MCF 10A (cell line): ENCODE measurements at regions of chr12 and their contacts with region 1.

Region 1: DNA sequence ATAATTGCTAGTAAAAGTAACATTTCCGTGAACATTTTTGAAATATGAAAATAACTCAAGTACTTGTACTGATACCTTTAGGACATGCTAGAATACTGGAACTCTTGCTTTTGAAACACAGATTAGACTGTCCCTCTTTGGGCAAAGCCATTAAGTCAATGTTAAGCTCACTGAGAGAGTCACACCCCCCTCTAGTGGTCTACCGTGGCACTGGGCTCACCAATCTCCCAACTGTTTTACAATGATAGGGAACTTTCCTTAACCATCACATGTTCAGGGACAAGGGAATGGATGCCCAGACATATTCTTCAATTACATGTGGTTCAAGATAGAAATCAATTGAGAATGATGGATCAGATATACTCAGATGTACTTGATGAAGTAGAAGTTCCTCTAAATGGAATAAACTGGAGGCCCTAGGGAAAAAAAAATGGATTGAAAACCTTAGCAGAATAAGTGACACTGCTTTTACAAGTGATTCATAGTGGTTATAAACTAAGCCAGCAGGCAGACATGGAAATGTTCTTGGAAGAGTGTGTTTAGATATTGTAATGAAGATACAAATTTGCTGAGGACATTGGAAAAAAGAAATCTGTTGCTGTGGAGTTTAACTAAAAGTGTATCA is 17.8 kb downstream of the NANOG start:
- DNase-seq: peak; percentile 74
- H3K4me3 Mint-ChIP-seq: no peak overlapping the region
- H3K27ac Mint-ChIP-seq: no peak overlapping the region
- H3K4me1 Mint-ChIP-seq: no peaks in the 10 kb centered on the region
- H3K27me3 Mint-ChIP-seq: no peaks in the 10 kb centered on the region
- CTCF ChIP-seq: peak; percentile 92

Region 2: GRCh38 chr12:7219599-7220243 is 587.3 kb before region 1 on chr12:
- CTCF ChIA-PET with region 1: interaction called, 4 read pairs
- POLR2A ChIA-PET with region 1: no interaction called
- intact Hi-C with region 1: loop called (anchors 5 kb)
- DNase-seq: peak; percentile 80
- H3K4me3 Mint-ChIP-seq: no peak overlapping the region
- H3K27ac Mint-ChIP-seq: no peak overlapping the region
- H3K4me1 Mint-ChIP-seq: no peaks in the 10 kb centered on the region
- H3K27me3 Mint-ChIP-seq: peaks cover 23% of the 10 kb centered on the region
- CTCF ChIP-seq: peak; percentile 84

Region 3: GRCh38 chr12:7555752-7556151 is 251.2 kb before region 1 on chr12:
- CTCF ChIA-PET with region 1: no interaction called
- POLR2A ChIA-PET with region 1: no interaction called
- intact Hi-C with region 1: no loop called
- DNase-seq: peak; percentile 67
- H3K4me3 Mint-ChIP-seq: no peak overlapping the region
- H3K27ac Mint-ChIP-seq: peak overlapping the region; percentile 33
- H3K4me1 Mint-ChIP-seq: peaks cover 7% of the 10 kb centered on the region
- H3K27me3 Mint-ChIP-seq: peaks cover 11% of the 10 kb centered on the region
- CTCF ChIP-seq: no peak

Region 4: GRCh38 chr12:7583571-7583970 is 223.4 kb before region 1 on chr12:
- CTCF ChIA-PET with region 1: interaction called, 3 read pairs
- POLR2A ChIA-PET with region 1: no interaction called
- intact Hi-C with region 1: loop called (anchors 5 kb)
- DNase-seq: no peak
- H3K4me3 Mint-ChIP-seq: no peak overlapping the region
- H3K27ac Mint-ChIP-seq: peak overlapping the region; percentile 57
- H3K4me1 Mint-ChIP-seq: peaks cover 11% of the 10 kb centered on the region
- H3K27me3 Mint-ChIP-seq: no peaks in the 10 kb centered on the region
- CTCF ChIP-seq: no peak

Region 5: GRCh38 chr12:7678738-7679137 is 128.2 kb before region 1 on chr12:
- CTCF ChIA-PET with region 1: interaction called, 86 read pairs
- POLR2A ChIA-PET with region 1: interaction called, 3 read pairs
- intact Hi-C with region 1: loop called (anchors 1 kb)
- DNase-seq: peak; percentile 33
- H3K4me3 Mint-ChIP-seq: no peak overlapping the region
- H3K27ac Mint-ChIP-seq: no peak overlapping the region
- H3K4me1 Mint-ChIP-seq: no peaks in the 10 kb centered on the region
- H3K27me3 Mint-ChIP-seq: no peaks in the 10 kb centered on the region
- CTCF ChIP-seq: no peak

Region 6: DNA sequence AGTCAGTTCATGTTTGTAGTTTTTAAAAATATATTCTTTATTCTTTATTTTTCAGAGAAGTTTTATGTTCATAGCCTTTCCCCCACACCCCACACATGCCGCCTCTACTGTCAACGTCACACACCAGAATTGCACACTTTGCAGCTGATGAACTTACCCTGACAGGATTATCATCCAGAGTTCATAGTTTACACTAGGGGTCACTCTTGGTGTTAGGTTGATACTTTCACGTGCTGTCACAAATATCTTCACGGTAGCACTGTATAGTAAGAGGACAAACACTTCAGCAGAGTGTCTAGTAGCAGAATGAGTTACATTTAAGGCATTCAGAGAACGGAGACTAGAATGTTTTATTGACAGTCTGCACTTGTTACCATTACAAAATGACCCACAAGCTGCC is 90.6 kb before region 1 on chr12:
- CTCF ChIA-PET with region 1: interaction called, 40 read pairs
- POLR2A ChIA-PET with region 1: no interaction called
- intact Hi-C with region 1: loop called (anchors 1 kb)
- DNase-seq: peak; percentile 35
- H3K4me3 Mint-ChIP-seq: no peak overlapping the region
- H3K27ac Mint-ChIP-seq: no peak overlapping the region
- H3K4me1 Mint-ChIP-seq: no peaks in the 10 kb centered on the region
- H3K27me3 Mint-ChIP-seq: peaks cover 10% of the 10 kb centered on the region
- CTCF ChIP-seq: no peak

Region 7: DNA sequence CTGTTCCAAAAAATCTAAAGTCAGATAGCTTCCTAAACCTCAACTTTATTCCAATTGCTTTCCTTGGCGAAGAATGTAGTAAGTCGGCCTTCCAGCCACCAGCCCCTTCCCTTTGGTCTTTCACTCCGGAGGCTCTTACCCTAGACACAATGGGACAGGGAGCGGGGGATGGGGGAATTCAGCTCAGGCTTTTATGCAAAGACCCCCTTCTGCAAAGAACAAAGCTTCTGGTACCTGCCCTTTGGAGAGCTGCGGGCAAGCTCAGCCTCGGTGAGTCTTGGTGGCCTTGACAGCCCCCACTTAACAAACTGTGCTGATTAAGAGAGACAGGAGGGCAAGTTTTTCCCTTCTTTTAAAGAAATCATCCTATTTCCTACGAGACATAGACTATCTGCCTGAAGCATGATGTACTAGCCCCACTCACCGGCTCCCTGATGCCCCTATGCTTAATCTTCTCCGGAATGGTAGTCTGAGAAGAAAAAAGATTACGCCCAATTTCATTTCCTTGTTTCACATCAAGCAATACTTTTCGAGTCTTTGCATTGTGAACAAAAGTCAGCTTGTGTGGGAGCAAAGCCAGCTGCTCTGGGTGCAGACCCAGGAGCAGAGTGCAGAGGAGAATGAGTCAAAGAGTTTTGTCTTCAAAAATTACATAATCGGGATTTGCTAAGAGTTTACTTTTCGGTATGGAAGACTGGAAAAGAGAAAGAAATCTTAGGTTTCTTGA is 19.2 kb before region 1 on chr12:
- CTCF ChIA-PET with region 1: interaction called, 13 read pairs
- POLR2A ChIA-PET with region 1: no interaction called
- intact Hi-C with region 1: no loop called
- DNase-seq: peak; percentile 20
- H3K4me3 Mint-ChIP-seq: no peak overlapping the region
- H3K27ac Mint-ChIP-seq: no peak overlapping the region
- H3K4me1 Mint-ChIP-seq: peaks cover 7% of the 10 kb centered on the region
- H3K27me3 Mint-ChIP-seq: no peaks in the 10 kb centered on the region
- CTCF ChIP-seq: no peak